Activated CD8-positive, alpha-beta memory T cell treated with anti-CD3 and anti-CD28 coated beads, Interleukin-2, amount 10 ng/mL, durations not matched to agents 7 days and 5 days (primary cell): ENCODE measurements at regions of chr15 and their contacts with region 1.

Region 1: GRCh38 chr15:31344823-31345605 is 18.4 kb downstream of the KLF13 start:
- DNase-seq: peak; percentile 69
- ATAC-seq: peak; percentile 41
- H3K4me3 Mint-ChIP-seq: peak overlapping the region; percentile 95
- H3K27ac Mint-ChIP-seq: peak overlapping the region; percentile 97
- H3K4me1 Mint-ChIP-seq: peaks cover 95% of the 10 kb centered on the region
- H3K27me3 Mint-ChIP-seq: no peaks in the 10 kb centered on the region

Region 2: DNA sequence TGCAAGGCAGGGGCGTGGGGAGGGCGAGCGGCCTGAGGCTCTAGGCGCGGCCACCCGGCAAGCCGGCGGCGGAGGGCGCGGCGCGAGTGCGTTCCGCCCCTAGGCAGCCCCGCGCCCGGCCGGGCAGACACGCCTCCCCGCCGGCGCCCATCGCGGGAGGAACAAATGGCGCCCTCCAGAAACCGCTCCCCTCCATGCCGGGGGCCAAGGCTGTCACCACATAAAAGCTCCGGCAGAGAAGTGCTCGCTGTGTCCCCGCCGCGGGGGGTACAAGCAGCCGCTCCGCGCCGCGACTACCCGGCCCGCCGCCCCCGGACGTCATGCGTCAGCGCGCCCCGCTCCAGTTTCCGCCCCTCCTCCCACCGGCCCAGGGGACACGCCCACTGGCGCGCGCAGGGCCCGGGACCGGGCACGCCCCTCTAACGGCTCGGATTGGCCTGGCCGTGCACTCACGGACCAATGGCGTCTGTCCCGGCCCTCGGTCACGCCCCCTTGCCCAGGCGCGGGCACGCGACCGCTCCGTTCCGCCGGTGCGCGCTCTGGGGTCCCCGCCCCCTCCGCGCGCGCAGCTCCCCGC is 18.8 kb before region 1 on chr15:
- CTCF ChIA-PET with region 1: interaction called, 11 read pairs
- DNase-seq: peak; percentile 99
- ATAC-seq: peak; percentile 80
- H3K4me3 Mint-ChIP-seq: peak overlapping the region; percentile 64
- H3K27ac Mint-ChIP-seq: peak overlapping the region; percentile 93
- H3K4me1 Mint-ChIP-seq: peaks cover 40% of the 10 kb centered on the region
- H3K27me3 Mint-ChIP-seq: no peaks in the 10 kb centered on the region

Region 3: DNA sequence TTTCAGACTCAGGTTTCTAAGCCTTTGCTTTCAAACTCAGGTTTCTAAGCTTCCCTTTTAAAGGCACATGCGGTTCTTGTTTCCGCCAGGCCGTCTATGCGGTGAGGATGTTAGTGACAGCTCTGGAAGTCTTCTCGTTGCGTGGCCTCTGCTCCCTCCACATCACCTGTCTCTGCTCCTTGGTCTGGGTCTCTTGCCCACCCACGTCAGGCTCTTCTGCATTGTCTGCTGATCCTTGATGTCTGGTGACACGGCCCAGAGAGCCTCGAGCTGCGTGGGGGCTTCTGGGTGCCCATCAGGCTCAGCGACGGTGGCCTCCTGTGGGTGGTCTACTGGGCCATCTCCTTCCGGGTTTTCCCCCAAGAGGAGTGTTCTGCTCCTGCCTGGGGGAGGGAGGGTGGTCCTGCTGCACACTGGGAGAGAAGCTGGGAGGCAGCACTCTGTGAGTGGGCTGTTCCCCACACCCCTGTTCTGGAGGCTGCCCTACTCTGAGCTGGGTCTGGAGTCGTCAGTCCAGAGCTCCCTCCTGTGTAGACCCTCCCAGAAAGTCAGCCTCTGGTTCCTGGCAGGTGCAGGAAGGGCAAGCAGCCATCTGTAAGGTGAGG is 12.2 kb after region 1 on chr15:
- CTCF ChIA-PET with region 1: interaction called, 27 read pairs
- DNase-seq: peak; percentile 75
- ATAC-seq: no peak
- H3K4me3 Mint-ChIP-seq: peak overlapping the region; percentile 69
- H3K27ac Mint-ChIP-seq: peak overlapping the region; percentile 100
- H3K4me1 Mint-ChIP-seq: peaks cover 97% of the 10 kb centered on the region
- H3K27me3 Mint-ChIP-seq: no peaks in the 10 kb centered on the region